Head of caudate nucleus (tissue), 42 donors: ENCODE measurements at regions of chr2 and their contacts with region 1.

Region 1: DNA sequence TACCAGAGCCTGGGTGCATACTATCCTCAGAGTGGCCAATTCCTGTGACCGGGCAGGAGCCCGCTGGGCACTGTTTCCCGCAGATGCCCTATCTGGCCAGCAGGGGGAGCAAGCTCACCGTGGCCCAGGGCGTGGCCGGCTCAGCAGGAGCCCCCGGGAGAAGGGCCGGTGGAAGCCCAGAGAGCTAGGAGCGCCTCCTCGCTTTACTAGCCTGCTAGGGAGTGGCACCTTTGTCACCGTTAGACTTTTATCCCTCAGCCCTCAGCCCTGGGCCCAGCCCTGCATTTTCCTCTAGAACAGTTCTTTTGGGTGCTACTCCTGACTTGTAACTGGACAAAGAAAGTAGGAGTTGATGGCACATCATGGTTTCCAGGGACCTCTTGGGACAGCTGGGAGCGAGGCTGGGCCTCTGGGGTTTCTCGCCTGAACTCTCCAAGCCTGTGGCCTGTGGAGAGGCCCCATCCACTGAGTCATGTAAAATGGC is 24.0 kb downstream of the TMEM177 start:
- DNase-seq: peak in 39 of 42 donors; percentile 44 to 89 (median 71)

Region 2: GRCh38 chr2:119826370-119826961 is 123.5 kb after region 1 on chr2:
- intact Hi-C with region 1: loop called (anchors 5 kb)
- DNase-seq: peak in 23 of 42 donors; percentile 4 to 68 (median 37)

Region 3: DNA sequence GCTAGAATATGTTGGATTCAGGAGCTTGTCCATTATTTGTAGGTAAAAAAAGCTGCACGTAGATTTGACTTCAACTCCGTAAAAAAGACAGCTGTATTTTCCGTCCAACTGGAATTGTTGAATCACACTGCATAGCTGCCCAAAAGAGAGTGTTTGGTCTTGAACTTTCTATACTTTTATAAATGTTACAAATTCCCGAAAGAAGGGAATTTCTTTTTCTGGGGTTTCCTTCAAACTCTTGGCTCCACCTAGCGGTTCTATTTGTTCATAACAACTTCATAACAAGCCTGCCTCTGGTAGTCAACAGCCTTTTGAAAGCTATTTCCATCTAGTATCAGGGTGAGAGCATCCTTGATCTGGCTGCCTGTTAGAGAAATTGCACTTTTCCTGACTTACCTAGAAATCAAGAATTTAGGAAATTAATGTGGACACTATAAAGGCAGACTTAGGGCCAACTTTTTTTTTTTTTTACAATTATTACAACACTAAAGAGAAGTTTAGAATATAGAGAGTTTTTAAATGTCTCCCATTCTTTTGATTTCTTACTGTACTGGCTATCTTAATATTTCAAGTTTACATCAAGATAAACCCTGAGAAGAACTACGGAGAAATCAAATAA is 472.1 kb after region 1 on chr2:
- intact Hi-C with region 1: loop called (anchors 10 kb)
- DNase-seq: peak in 16 of 42 donors; percentile 24 to 72 (median 40)